Activated T-helper 2 cell treated with anti-CD3 and anti-CD28 coated beads, Interferon-gamma antibody, Interleukin-2, Interleukin-4, amounts not matched to agents 10 μg/mL and 5 μg/mL and 100 μg/mL, durations not matched to agents 14 hours and 24 hours and 36 hours (primary cell): ENCODE measurements at regions of chr5 and their contacts with region 1.

Region 1: GRCh38 chr5:75566710-75567309 is 44.4 kb upstream of the ANKDD1B start:
- DNase-seq: peak; percentile 30
- H3K4me3 Mint-ChIP-seq: peak overlapping the region; percentile 20
- H3K27ac Mint-ChIP-seq: peak overlapping the region; percentile 96
- H3K4me1 Mint-ChIP-seq: peaks cover 43% of the 10 kb centered on the region
- H3K27me3 Mint-ChIP-seq: no peaks in the 10 kb centered on the region

Region 2: GRCh38 chr5:75336625-75337339 is 230.0 kb before region 1 on chr5 and contains the start of gene HMGCR:
- intact Hi-C with region 1: loop called (anchors 2 kb)
- DNase-seq: peak; percentile 97
- H3K4me3 Mint-ChIP-seq: no peak within 1 kb of the TSS
- H3K27ac Mint-ChIP-seq: no peak within 1 kb of the TSS
- H3K4me1 Mint-ChIP-seq: peaks cover 33% of the 10 kb centered on the region
- H3K27me3 Mint-ChIP-seq: no peaks in the 10 kb centered on the region
- total RNA-seq, gene HMGCR: 122 and 123 TPM in 2 replicates

Region 3: GRCh38 chr5:75511435-75512384 is 55.1 kb before region 1 on chr5 and contains the starts of genes CERT1 and POLK:
- intact Hi-C with region 1: loop called (anchors 1 kb)
- DNase-seq: peak; percentile 95
- H3K4me3 Mint-ChIP-seq: peak within 1 kb of the TSS; percentile 100
- H3K27ac Mint-ChIP-seq: peak within 1 kb of the TSS; percentile 90
- H3K4me1 Mint-ChIP-seq: peaks cover 51% of the 10 kb centered on the region
- H3K27me3 Mint-ChIP-seq: no peaks in the 10 kb centered on the region
- total RNA-seq, gene CERT1: 38.6 and 43.7 TPM in 2 replicates
- total RNA-seq, gene POLK: 41.4 and 42.6 TPM in 2 replicates

Region 4: DNA sequence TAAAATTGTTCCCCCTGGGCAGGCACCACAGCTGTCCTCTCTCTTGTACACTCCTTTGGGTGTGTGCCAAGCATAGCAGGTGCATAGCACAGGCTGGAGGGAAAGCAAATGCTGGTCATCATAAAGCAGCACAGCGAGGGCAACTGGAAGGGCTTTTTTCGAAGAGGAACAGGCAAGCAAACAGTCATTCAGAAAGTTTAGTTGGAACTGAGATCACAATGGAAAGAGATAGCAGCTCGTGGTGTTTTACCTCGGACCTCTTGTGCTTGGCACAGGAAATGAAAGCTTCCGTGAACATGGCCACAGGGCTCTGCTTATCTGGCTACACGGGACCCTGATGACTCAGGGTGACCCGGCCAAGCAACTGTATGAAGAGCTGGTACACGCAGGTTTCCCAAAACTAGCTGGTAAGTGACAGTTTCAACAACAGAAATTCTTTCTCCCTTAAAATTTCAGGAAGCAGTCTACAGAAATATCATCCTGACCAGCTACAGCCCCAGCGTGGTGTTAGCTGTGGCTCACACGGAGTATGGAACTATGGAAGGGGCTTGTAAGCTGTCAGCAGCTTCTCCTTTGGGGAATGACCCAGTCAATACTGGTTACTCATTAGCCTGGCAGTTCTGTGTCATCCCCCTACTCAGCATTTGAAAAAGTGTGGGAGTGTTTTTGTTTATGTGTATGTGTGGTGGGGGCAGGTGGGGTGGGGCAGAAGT is 102.3 kb after region 1 on chr5:
- intact Hi-C with region 1: loop called (anchors 1 kb)
- DNase-seq: peak; percentile 57
- H3K4me3 Mint-ChIP-seq: peak overlapping the region; percentile 65
- H3K27ac Mint-ChIP-seq: peak overlapping the region; percentile 92
- H3K4me1 Mint-ChIP-seq: peaks cover 54% of the 10 kb centered on the region
- H3K27me3 Mint-ChIP-seq: no peaks in the 10 kb centered on the region

Region 5: DNA sequence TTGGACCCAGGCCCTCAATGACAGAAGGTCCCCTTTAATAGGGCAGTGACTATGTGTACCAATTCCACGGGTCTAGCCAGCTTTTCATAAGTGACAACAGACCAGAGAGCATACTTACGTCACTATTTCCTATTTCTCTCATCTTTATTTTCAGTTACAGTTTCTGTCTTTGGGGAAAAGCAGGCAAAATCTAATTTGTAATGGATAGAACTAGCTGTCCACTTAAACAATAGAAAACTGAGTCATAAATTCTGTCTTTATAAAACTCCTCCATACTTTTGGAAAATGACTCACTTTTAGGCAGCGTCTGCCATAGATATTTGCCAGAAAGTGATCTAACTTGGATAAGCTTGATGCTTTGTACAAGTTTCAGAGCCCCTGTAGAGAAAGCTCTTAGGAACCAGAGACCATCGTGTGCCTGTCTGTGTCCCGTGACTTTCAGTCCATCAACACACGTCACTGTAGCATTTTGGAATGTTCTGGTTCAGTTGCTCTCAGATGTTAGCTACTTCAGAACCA is 954.5 kb after region 1 on chr5:
- intact Hi-C with region 1: loop called (anchors 5 kb)
- DNase-seq: no peak
- H3K4me3 Mint-ChIP-seq: peak overlapping the region; percentile 24
- H3K27ac Mint-ChIP-seq: peak overlapping the region; percentile 82
- H3K4me1 Mint-ChIP-seq: peaks cover 49% of the 10 kb centered on the region
- H3K27me3 Mint-ChIP-seq: no peaks in the 10 kb centered on the region